Activated T-helper 2 cell treated with anti-CD3 and anti-CD28 coated beads, Interferon-gamma antibody, Interleukin-2, Interleukin-4, amounts not matched to agents 10 μg/mL and 5 μg/mL and 100 μg/mL, durations not matched to agents 14 hours and 24 hours and 36 hours (primary cell): ENCODE measurements at regions of chr6 and their contacts with region 1.

Region 1: DNA sequence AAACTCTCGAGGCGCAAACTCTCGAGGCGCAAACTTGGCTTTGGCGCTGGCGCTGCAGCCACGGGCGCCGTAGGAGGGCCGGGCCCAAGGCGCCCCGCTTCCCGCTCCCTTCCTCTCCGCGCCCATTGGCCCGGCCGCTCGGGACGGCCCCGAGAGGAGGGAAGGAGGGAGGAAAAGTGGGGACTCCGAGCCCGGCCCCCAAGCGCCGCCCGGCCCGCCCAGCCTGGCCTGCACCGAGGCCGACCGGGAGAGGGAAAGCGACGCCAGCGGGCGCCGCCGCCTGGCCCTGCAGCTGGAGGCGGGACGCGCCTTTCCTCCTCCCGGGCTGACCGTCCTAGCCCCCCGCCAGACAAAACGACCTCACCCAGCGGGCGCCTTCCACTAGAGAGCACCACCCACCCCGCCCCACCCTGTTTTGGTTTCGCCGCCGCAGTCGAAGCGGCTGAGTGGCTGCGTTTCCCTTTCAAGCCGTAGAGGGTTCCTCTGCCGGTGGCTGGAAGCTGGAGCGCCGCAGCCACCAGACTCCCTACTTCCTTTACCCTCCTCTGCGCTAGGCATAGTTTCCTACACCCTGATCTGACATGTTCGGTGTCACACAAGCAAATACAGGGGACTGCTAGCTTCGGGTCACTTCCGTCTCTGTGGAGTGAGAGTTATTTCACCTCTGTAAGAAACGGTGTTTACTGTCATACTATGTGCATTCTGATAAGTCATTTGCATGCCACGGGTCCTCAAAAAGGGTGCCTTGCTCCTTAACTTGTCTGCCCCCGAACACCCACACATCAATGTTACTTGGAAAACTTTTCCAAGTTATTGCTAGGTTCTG is at the start of gene MBOAT1:
- DNase-seq: peak; percentile 77
- H3K4me3 Mint-ChIP-seq: peak within 1 kb of the TSS; percentile 90
- H3K27ac Mint-ChIP-seq: peak within 1 kb of the TSS; percentile 94
- H3K4me1 Mint-ChIP-seq: peaks cover 41% of the 10 kb centered on the region
- H3K27me3 Mint-ChIP-seq: no peaks in the 10 kb centered on the region
- total RNA-seq, gene MBOAT1: 32.8 and 33.8 TPM in 2 replicates

Region 2: GRCh38 chr6:20126789-20127653 is 85.6 kb before region 1 on chr6:
- intact Hi-C with region 1: loop called (anchors 1 kb)
- DNase-seq: peak; percentile 41
- H3K4me3 Mint-ChIP-seq: no peak overlapping the region
- H3K27ac Mint-ChIP-seq: no peak overlapping the region
- H3K4me1 Mint-ChIP-seq: peaks cover 8% of the 10 kb centered on the region
- H3K27me3 Mint-ChIP-seq: no peaks in the 10 kb centered on the region

Region 3: GRCh38 chr6:20186981-20187380 is 25.6 kb before region 1 on chr6:
- intact Hi-C with region 1: loop called (anchors 1 kb)
- DNase-seq: no peak
- H3K4me3 Mint-ChIP-seq: no peak overlapping the region
- H3K27ac Mint-ChIP-seq: peak overlapping the region; percentile 56
- H3K4me1 Mint-ChIP-seq: peaks cover 59% of the 10 kb centered on the region
- H3K27me3 Mint-ChIP-seq: no peaks in the 10 kb centered on the region

Region 4: DNA sequence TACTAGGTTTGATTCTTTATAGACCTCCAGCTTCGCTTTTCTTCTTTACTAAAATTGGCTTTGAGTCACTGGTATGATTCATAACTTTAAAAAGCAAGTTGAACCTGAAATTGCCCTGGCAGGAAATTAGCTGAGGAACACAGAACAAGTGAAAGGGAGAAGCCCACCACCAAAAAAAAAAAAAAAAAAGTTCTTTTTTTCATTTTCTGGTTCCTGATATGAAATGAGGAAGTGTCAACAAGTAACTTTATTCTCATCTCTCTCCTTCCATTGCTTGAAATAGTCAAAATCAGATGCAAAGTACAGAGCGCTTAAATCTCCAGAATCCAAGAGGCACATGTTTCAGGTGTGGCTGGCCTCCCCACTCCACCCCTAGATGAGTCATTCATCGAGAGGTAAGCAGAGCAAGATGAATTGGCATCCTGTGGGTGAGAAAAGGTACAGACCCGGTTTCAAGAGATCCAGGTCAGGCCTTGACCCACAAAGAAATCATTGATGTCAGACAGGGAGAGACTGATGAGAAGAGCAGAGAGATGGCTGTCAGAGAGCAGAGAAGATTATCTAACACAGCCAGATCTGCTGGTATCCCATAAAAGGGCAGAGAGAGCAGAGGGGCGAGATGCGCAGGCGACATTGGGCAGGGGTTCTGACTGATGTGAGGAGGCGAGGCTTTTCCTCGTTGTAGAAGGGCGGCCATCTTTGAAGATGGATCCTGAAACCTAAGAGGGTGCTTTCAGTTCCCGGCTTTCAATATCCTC is 54.4 kb after region 1 on chr6:
- intact Hi-C with region 1: loop called (anchors 5 kb)
- DNase-seq: no peak
- H3K4me3 Mint-ChIP-seq: no peak overlapping the region
- H3K27ac Mint-ChIP-seq: peak overlapping the region; percentile 20
- H3K4me1 Mint-ChIP-seq: peaks cover 6% of the 10 kb centered on the region
- H3K27me3 Mint-ChIP-seq: peaks cover 11% of the 10 kb centered on the region

Region 5: DNA sequence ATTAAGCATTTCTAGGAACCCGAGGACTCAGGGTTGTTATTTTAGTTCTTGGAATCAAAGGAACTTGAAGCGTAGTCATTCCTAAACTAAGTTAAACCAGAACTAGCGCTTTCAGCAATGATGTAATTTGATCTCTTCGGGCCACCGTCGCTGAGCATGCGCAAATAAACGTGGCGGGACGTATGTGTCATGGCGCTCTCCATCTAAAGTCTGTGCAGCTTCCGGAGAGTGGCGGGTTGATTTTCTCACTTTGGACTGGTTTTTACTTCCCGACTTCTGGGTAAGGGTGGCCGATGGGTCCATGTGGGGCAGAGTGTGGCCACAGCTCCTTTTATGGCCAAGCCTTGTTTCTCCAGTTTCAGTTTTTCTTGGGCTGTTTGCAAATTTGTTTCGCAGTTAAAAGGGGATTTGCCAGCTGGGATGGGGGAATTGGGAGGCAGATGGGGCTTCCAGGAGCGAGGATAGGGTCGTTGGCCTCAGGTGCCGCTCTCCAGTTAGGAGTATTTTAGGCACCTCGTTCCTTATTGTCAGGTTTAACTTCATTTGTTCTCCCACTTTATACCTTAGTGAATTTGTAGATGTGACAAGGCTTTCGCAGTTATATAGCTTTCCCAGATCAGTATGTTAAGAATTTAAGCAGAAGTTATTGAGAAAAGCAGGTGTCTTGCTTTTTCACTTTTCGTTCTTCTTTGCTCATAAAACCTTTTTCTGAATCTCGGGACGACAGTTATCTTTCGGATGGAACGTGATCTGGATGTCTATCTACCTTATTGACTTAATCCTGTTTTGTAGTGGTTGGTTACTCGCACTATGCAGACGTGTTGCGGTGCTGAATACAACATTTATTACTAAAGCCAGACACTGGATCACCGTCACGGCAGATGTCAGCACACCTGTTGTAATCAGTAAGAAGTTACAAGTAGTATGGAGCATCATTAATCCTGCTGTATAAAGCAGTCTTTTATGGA is 322.0 kb after region 1 on chr6 and contains the start of gene CDKAL1:
- intact Hi-C with region 1: loop called (anchors 5 kb)
- DNase-seq: peak; percentile 91
- H3K4me3 Mint-ChIP-seq: peak within 1 kb of the TSS; percentile 93
- H3K27ac Mint-ChIP-seq: peak within 1 kb of the TSS; percentile 93
- H3K4me1 Mint-ChIP-seq: peaks cover 51% of the 10 kb centered on the region
- H3K27me3 Mint-ChIP-seq: no peaks in the 10 kb centered on the region
- total RNA-seq, gene CDKAL1: 30.5 and 31.2 TPM in 2 replicates